Left colon (tissue), 2 donors: ENCODE measurements at regions of chr3 and their contacts with region 1.

Region 1: GRCh38 chr3:24680214-24680967 is 185.7 kb upstream of the THRB start:
- DNase-seq: peak in 1 of 2 donors; percentile 75
- ATAC-seq: peak; percentile 77

Region 2: GRCh38 chr3:23999012-23999641 is 681.3 kb before region 1 on chr3:
- intact Hi-C with region 1: loop called (anchors 5 to 10 kb)
- DNase-seq: peak in 1 of 2 donors; percentile 74
- ATAC-seq: no peak

Region 3: DNA sequence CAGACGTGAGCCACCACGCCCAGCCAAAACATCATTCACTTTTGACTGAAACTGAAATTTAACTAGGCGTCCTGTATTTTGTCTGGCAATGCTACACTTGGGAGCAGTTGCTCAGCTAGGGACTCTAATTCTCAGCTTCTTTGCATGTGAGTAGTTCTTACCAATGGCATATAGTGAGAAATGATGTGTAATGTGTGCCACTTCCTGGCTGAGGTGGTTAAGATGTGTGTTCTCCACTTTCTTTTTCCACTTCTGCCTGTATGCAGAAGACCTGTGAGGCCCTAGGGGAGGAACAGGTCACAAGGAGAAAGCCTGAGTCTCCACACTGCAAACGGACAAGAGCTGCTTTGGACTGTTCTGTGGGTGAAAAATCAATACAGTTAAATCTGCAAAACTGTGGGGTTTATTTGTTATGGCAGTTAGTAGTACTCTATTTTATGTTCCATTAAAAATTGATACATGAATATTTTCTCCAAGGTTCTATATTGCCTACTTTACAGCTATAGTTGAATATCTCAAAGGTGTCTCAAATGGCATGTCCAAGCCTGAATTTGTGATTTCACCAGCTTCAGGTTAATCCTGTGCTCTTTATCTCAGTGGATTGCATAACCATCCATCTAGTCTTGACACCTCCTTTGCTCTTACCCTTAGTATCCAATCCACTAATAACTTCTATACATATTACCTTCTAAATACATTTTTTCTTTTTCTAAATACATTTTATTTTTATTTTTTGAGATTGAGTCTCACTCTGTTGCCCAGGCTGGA is 676.0 kb before region 1 on chr3:
- intact Hi-C with region 1: loop called (anchors 5 to 10 kb)
- DNase-seq: no peak
- ATAC-seq: no peak

Region 4: GRCh38 chr3:24237971-24238767 is 442.2 kb before region 1 on chr3:
- intact Hi-C with region 1: loop called in 1 of 2 experiments (anchors 10 kb)
- DNase-seq: peak; percentile 21 to 47
- ATAC-seq: peak; percentile 97